ENCODE measurements at regions of chr17 and their contacts with region 1.

Region 1: DNA sequence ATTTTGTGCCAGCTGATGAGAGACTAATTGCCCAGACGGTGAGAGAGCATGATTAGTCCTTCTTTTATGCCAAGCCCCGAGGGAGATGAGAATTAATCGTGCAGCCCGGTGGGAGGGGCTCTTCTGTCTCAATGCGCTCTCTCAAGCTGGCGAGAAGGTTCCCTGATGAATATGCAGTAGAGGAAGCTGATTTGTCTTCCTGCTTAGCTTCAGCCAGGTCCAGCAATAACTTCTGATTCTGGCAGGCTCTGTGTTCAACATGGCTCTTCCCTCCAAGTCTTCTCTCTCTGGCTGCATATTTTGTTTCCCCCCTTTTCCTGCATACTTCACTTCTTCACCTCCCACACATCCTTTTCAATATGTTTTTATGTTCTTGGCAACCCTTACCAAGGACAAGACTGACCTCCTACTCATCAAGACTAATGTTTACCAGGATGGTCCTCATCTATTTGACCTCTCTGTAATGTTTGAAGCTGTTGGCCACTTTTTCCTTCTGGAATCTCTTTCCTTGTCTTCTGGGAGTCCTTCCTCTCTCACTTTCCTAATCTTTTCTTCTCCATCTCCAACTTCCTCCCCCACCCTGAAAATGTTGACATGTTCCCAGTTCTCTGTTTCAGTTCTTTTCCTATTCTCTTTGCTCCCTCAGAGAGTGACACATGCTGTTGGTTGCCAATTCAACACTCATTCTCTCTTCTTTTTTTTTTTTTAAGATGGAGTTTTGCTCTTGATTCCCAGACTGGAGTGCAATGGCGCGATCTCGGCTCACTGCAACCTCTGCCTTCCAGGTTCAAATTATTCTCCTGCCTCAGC is 33.1 kb downstream of the ARL4D start:
- DNase-seq: peak; percentile 75
- H3K4me3 ChIP-seq: no peak overlapping the region
- H3K27ac ChIP-seq: peak overlapping the region in 2 of 4 donors; percentile 1 to 55
- H3K4me1 ChIP-seq: peaks cover 0 to 12% (median 9%) of the 10 kb centered on the region in 4 donors
- H3K27me3 ChIP-seq: no peaks in the 10 kb centered on the region
- CTCF ChIP-seq: no peak
- EP300 ChIP-seq: no peak
- POLR2A ChIP-seq: no peak

Region 2: GRCh38 chr17:43393944-43394482 is 37.9 kb before region 1 on chr17:
- intact Hi-C with region 1: loop called (anchors 5 kb)
- DNase-seq: peak; percentile 97
- H3K4me3 ChIP-seq: peak overlapping the region in 3 of 4 donors; percentile 17 to 29 (median 28)
- H3K27ac ChIP-seq: peak overlapping the region; percentile 59 to 77 (median 76)
- H3K4me1 ChIP-seq: peaks cover 6 to 27% (median 19%) of the 10 kb centered on the region in 4 donors
- H3K27me3 ChIP-seq: no peaks in the 10 kb centered on the region
- CTCF ChIP-seq: peak; percentile 84 to 99 (median 97)
- EP300 ChIP-seq: no peak
- POLR2A ChIP-seq: no peak

Region 3: DNA sequence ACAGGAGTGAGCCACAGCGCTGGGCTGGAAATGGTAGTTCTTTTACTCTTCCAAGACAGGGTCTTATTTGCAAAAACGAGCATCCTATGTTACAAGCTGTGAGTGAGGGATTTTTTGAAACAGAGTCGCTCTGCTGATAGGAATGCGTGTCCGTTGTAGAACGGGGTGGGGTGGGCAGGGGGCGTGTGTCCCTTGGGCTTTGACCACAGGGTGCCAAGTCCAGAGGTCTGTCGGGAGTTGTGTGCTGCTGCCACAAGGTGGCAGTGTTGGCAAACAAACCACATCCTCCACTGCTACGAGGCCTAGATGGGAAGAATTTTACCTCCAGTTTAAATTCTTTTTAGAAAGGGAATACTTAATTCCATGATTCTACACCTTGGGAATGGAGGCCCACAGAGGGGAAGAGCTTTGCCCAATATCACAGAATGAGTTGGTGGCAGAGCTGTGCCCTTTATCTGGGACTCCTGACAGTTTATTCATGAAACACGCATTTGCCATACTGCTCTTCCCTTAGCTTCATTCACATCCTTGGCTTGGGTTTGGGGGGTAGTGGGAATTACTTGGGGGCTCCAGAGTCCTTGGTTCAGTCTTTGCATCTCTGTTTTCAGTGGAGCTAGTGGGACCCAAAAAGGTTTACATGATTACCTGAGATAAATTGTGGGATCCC is 144.8 kb after region 1 on chr17:
- intact Hi-C with region 1: no loop called
- DNase-seq: peak; percentile 77
- H3K4me3 ChIP-seq: no peak overlapping the region
- H3K27ac ChIP-seq: no peak overlapping the region
- H3K4me1 ChIP-seq: peaks cover 0 to 18% (median 15%) of the 10 kb centered on the region in 4 donors
- H3K27me3 ChIP-seq: no peaks in the 10 kb centered on the region
- CTCF ChIP-seq: peak; percentile 88 to 96 (median 92)
- EP300 ChIP-seq: no peak
- POLR2A ChIP-seq: no peak